HepG2 (cell line): ENCODE measurements at regions of chr6 and their contacts with region 1.

Region 1: GRCh38 chr6:26537846-26538571 is at the start of gene HMGN4:
- DNase-seq: peak; percentile 92
- ATAC-seq: peak; percentile 85
- H3K4me3 ChIP-seq: peak within 1 kb of the TSS; percentile 83 to 89 (median 83)
- H3K27ac ChIP-seq: peak within 1 kb of the TSS; percentile 74
- H3K4me1 ChIP-seq: peaks cover 39% of the 10 kb centered on the region
- H3K27me3 ChIP-seq: no peaks in the 10 kb centered on the region
- CTCF ChIP-seq: peak; percentile 48
- EP300 ChIP-seq: no peak
- POLR2A ChIP-seq: peak; percentile 54 to 83; a peak in 3 of 4 replicates
- RAD21 ChIP-seq: peak; percentile 32; the same call in 1 of the 2 replicates
- total RNA-seq, gene HMGN4: 52.1 and 79.1 TPM in 2 replicates

Region 2: DNA sequence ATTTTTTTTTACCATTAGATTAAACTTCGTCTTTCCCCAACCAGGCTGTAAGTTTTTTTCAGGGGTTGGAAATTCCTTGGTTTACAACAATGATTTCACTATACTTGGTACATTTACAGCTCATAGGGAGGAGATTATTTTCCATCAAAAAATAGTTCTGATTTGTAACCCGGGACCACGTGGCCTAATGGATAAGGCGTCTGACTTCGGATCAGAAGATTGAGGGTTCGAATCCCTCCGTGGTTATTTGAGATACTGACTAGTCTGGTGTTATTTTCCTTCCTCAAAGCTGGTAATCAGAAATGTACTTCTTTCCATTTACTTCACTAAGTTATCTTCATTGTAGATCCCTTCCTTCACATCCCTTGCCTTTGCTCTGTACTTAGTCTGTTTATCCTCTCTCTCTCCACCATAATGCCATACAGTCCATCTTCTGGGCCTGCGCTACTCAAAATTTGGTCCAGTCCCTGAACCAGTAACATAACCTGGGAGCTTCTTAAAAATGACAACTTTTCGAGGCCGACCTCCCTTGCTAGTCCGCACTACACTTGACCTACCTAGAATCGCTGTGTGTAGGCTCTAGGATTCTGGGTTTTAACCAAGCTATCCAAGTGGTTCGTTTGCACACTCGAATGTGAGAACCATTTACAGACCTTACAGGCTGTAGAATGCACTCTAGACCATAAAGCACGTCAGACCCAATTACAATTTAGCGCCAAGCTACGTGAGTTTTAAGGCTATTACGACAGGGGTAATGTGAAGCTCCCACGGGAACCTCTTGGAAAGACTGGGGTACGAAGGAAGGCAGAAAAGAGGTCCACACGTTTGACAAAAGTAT is 215.1 kb before region 1 on chr6:
- CTCF ChIA-PET with region 1: no interaction called
- POLR2A ChIA-PET with region 1: interaction called, 11 read pairs
- in situ Hi-C with region 1: no loop called
- intact Hi-C with region 1: no loop called
- DNase-seq: peak; percentile 93
- ATAC-seq: peak; percentile 64
- H3K4me3 ChIP-seq: peak overlapping the region; percentile 61 to 89 (median 78)
- H3K27ac ChIP-seq: peak overlapping the region; percentile 76
- H3K4me1 ChIP-seq: peaks cover 65% of the 10 kb centered on the region
- H3K27me3 ChIP-seq: no peaks in the 10 kb centered on the region; a peak in 1 of 5 replicates
- CTCF ChIP-seq: no peak
- EP300 ChIP-seq: no peak
- POLR2A ChIP-seq: no peak
- RAD21 ChIP-seq: no peak

Region 3: GRCh38 chr6:26342106-26343004 is 195.7 kb before region 1 on chr6:
- CTCF ChIA-PET with region 1: no interaction called
- POLR2A ChIA-PET with region 1: interaction called, 5 read pairs
- in situ Hi-C with region 1: no loop called
- intact Hi-C with region 1: loop called (anchors 1 kb)
- DNase-seq: no peak
- ATAC-seq: peak; percentile 44
- H3K4me3 ChIP-seq: peak overlapping the region in 1 of 3 experiments; percentile 30; a peak in 2 of 6 replicates
- H3K27ac ChIP-seq: no peak overlapping the region
- H3K4me1 ChIP-seq: peaks cover 74% of the 10 kb centered on the region
- H3K27me3 ChIP-seq: no peaks in the 10 kb centered on the region
- CTCF ChIP-seq: no peak
- EP300 ChIP-seq: no peak
- POLR2A ChIP-seq: no peak
- RAD21 ChIP-seq: no peak

Region 4: DNA sequence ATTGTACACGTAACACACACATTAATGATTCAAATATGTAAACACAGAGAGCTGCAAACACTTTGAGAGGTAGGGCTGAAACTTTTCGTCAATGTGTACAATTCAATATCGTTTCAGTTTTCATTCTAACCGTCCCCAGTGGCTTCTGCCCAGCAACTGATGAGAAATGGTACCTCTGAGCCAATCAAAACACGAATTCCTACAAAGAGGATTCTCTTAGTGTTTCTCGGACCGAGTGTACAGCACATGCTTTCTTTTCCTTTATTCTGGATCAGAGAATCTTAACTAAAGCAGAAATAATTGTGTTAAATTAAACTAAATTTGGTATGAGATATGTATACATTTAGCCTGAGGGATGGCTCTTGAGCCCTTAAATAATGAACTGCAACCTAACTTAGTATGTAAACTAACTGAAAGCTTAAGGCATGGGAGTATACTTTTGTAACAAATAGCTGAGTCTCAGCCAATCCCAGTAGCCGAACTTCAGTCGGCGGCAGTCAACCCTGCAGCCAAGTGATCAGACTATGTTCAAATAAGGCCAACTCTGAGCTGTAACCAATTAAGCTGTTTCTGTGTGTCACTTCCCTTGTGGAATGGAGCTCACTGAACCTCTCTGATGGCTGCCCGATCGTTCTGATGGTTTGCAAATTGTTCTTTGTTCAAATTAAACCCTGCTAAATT is 64.1 kb before region 1 on chr6:
- CTCF ChIA-PET with region 1: no interaction called
- POLR2A ChIA-PET with region 1: interaction called, 22 read pairs
- in situ Hi-C with region 1: no loop called
- intact Hi-C with region 1: loop called (anchors 1 kb)
- DNase-seq: peak; percentile 90
- ATAC-seq: peak; percentile 92
- H3K4me3 ChIP-seq: peak overlapping the region; percentile 57 to 84 (median 70)
- H3K27ac ChIP-seq: peak overlapping the region; percentile 83
- H3K4me1 ChIP-seq: peaks cover 61% of the 10 kb centered on the region
- H3K27me3 ChIP-seq: no peaks in the 10 kb centered on the region
- CTCF ChIP-seq: no peak
- EP300 ChIP-seq: no peak
- POLR2A ChIP-seq: peak; percentile 62 to 72
- RAD21 ChIP-seq: no peak

Region 5: GRCh38 chr6:26520853-26521599 is 17.0 kb before region 1 on chr6:
- CTCF ChIA-PET with region 1: no interaction called
- POLR2A ChIA-PET with region 1: interaction called, 8 read pairs
- in situ Hi-C with region 1: no loop called
- intact Hi-C with region 1: loop called (anchors 2 kb)
- DNase-seq: peak; percentile 82
- ATAC-seq: peak; percentile 88
- H3K4me3 ChIP-seq: peak overlapping the region; percentile 62 to 67 (median 62)
- H3K27ac ChIP-seq: peak overlapping the region; percentile 42
- H3K4me1 ChIP-seq: peaks cover 69% of the 10 kb centered on the region
- H3K27me3 ChIP-seq: no peaks in the 10 kb centered on the region
- CTCF ChIP-seq: 0 out of 2 replicates have a peak, but pooled peaks have one; percentile 5
- EP300 ChIP-seq: peak in 1 of 2 experiments; percentile 28; a peak in 1 of 4 replicates
- POLR2A ChIP-seq: peak; percentile 21 to 70
- RAD21 ChIP-seq: no peak

Region 6: GRCh38 chr6:26568601-26569432 is 30.8 kb after region 1 on chr6:
- CTCF ChIA-PET with region 1: no interaction called
- POLR2A ChIA-PET with region 1: interaction called, 14 read pairs
- in situ Hi-C with region 1: no loop called
- intact Hi-C with region 1: loop called (anchors 1 kb)
- DNase-seq: peak; percentile 95
- ATAC-seq: peak; percentile 35
- H3K4me3 ChIP-seq: peak overlapping the region; percentile 55 to 85 (median 78)
- H3K27ac ChIP-seq: peak overlapping the region; percentile 7
- H3K4me1 ChIP-seq: peaks cover 61% of the 10 kb centered on the region
- H3K27me3 ChIP-seq: no peaks in the 10 kb centered on the region; a peak in 1 of 5 replicates
- CTCF ChIP-seq: peak; percentile 5; the same call in 1 of the 2 replicates
- EP300 ChIP-seq: 0 out of 4 replicates have a peak, but pooled peaks of 1 of the 2 experiments have one; percentile 5
- POLR2A ChIP-seq: no peak
- RAD21 ChIP-seq: no peak